ENCODE measurements at regions of chr1 and their contacts with region 1.

Region 1: GRCh38 chr1:42747125-42747524 is 7.1 kb upstream of the CLDN19 start:
- DNase-seq: peak; percentile 56
- ATAC-seq: peak; percentile 43
- H3K4me3 ChIP-seq: no peak overlapping the region
- H3K4me3 Mint-ChIP-seq: no peak overlapping the region
- H3K27ac ChIP-seq: no peak overlapping the region
- H3K27ac Mint-ChIP-seq: no peak overlapping the region
- H3K4me1 ChIP-seq: no peaks in the 10 kb centered on the region
- H3K4me1 Mint-ChIP-seq: no peaks in the 10 kb centered on the region
- H3K27me3 ChIP-seq: no peaks in the 10 kb centered on the region
- H3K27me3 Mint-ChIP-seq: no peaks in the 10 kb centered on the region
- CTCF ChIP-seq: peak; percentile 64

Region 2: DNA sequence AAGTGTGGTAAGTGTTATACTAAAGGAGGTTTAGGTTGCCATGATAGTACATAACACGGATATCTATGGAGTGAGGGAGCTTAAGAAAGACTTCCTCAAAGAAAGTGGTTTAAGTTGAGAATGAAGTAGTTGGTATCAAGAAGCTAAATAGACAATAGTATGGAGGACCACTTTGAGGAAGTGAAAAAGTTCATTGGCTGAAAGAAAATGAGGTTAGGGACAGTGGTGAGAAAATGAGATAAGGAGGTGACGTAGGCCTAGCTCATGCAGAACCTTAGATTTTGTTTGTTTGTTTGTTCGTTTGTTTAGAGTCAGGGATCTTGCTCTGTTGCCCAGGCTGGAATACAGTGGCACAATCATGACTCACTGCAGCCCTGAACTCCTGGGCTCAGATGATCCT is 161.1 kb before region 1 on chr1:
- CTCF ChIA-PET with region 1: interaction called, 19 read pairs
- POLR2A ChIA-PET with region 1: no interaction called
- intact Hi-C with region 1: no loop called
- DNase-seq: peak; percentile 25
- ATAC-seq: no peak
- H3K4me3 ChIP-seq: no peak overlapping the region
- H3K4me3 Mint-ChIP-seq: no peak overlapping the region
- H3K27ac ChIP-seq: no peak overlapping the region
- H3K27ac Mint-ChIP-seq: no peak overlapping the region
- H3K4me1 ChIP-seq: no peaks in the 10 kb centered on the region
- H3K4me1 Mint-ChIP-seq: peaks cover 3% of the 10 kb centered on the region
- H3K27me3 ChIP-seq: no peaks in the 10 kb centered on the region
- H3K27me3 Mint-ChIP-seq: no peaks in the 10 kb centered on the region
- CTCF ChIP-seq: no peak

Region 3: GRCh38 chr1:43199064-43199726 is 452.1 kb after region 1 on chr1:
- CTCF ChIA-PET with region 1: no interaction called
- POLR2A ChIA-PET with region 1: no interaction called
- intact Hi-C with region 1: no loop called
- DNase-seq: no peak
- ATAC-seq: no peak
- H3K4me3 ChIP-seq: no peak overlapping the region
- H3K4me3 Mint-ChIP-seq: no peak overlapping the region
- H3K27ac ChIP-seq: no peak overlapping the region
- H3K27ac Mint-ChIP-seq: no peak overlapping the region
- H3K4me1 ChIP-seq: no peaks in the 10 kb centered on the region
- H3K4me1 Mint-ChIP-seq: no peaks in the 10 kb centered on the region
- H3K27me3 ChIP-seq: no peaks in the 10 kb centered on the region
- H3K27me3 Mint-ChIP-seq: peaks cover 14% of the 10 kb centered on the region
- CTCF ChIP-seq: no peak